CD14-positive monocyte (primary cell): ENCODE measurements at regions of chrX and their contacts with region 1.

Region 1: DNA sequence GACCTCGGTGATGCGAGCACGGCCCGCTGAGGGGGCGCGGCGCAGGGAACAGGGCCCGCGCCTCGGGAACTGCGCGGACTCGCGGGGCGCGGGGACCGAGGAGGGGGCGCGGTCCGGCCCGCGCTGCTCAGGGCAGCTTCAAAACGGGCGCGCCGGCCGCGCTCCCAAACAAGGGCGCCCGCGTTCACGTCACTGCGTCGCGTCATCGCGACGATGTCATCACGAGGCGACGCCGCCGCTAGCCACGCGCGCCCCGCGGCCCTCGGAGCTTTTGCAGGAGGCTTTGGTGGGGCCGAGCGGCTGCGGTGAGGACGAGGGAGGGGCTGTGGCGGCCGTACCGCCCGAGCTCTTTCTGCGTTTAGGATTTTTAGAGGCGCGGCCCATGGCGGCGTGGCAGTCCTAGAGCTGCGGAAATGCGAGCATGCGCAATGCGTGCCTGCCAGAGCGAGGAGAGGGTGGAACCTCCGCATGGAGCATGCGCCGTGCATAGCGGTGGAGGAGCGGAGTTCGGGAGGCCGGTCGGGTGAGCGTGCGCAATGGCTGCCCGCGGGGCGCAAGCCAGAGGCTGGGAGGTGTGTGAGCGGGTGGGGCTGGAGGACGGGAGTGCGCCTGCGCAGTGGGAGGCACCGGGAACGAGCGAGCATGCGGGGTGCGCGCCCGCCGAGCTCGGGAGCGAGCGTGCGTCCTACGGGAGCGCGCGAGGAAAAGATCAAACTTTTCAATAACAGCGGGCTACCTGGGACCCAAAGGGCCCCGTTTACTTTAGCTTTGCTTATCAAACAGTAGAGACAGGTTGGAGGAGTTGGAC is at the start of gene PPP2R3B:
- DNase-seq: peak; percentile 97 to 99 (median 99)
- H3K4me3 ChIP-seq: peak within 1 kb of the TSS; percentile 75 to 89 (median 84)
- H3K4me3 Mint-ChIP-seq: peak within 1 kb of the TSS; percentile 82 to 94
- H3K27ac ChIP-seq: peak within 1 kb of the TSS; percentile 87 to 99
- H3K27ac Mint-ChIP-seq: peak within 1 kb of the TSS; percentile 93 to 98 (median 95)
- H3K4me1 ChIP-seq: peaks cover 10 to 11% of the 10 kb centered on the region in 2 donors
- H3K4me1 Mint-ChIP-seq: peaks cover 4% of the 10 kb centered on the region
- H3K27me3 ChIP-seq: no peaks in the 10 kb centered on the region
- H3K27me3 Mint-ChIP-seq: peaks cover 0 to 2% (median 0%) of the 10 kb centered on the region in 3 donors
- CTCF ChIP-seq: no peak
- polyA plus RNA-seq, gene PPP2R3B: 2.1 to 9.0 (median 2.3) TPM

Region 2: DNA sequence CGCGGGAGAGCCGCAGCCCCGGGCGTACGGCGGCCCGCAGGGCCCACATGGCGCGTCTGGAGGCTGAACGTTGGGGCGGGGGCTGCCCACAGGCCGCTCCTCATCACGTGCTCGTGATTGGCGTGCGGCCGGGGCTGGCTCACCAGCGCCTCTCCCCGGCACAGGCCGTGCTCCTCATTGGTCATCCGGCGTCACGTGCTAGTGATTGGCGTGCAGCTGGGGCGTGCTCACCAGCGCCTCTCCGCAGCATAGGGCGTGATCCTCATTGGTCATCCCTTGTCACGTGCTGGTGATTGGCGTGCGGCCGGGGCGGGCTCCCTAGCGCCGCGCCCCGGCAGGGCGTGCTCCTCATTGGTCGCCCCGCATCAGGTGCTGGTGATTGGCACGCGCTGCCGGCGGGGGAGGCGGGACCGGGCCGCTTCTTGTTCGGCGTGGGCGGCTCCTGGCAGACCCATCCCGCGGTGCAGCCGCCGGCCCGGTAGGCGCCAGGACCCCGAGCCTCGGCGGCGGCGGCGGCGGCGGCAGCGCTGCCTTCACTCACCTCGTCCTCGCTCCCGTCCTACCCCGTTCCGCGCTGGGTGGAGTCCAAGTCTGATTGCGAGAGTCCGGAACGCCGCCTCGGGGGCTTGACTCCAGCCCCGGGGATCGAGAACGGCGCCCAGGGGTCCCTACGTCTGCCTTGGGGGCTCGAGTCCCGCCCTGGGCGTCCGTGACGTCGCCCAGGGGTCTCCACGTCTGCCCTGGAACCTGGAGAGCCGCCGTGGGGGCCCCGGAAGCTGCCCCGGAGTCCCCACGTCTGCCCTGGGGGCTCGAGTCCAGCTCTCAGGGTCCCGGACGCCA is 68.0 kb before region 1 on chrX and contains the start of gene GTPBP6:
- intact Hi-C with region 1: loop called (anchors 2 to 5 kb)
- DNase-seq: peak; percentile 99 to 100 (median 100)
- H3K4me3 ChIP-seq: peak within 1 kb of the TSS; percentile 81 to 98 (median 85)
- H3K4me3 Mint-ChIP-seq: peak within 1 kb of the TSS; percentile 85 to 93
- H3K27ac ChIP-seq: peak within 1 kb of the TSS; percentile 92 to 93
- H3K27ac Mint-ChIP-seq: peak within 1 kb of the TSS; percentile 96 to 100 (median 98)
- H3K4me1 ChIP-seq: peaks cover 19 to 23% of the 10 kb centered on the region in 2 donors
- H3K4me1 Mint-ChIP-seq: peaks cover 28% of the 10 kb centered on the region
- H3K27me3 ChIP-seq: peaks cover 0 to 24% of the 10 kb centered on the region in 2 donors
- H3K27me3 Mint-ChIP-seq: peaks cover 10 to 30% (median 29%) of the 10 kb centered on the region in 3 donors
- CTCF ChIP-seq: no peak
- polyA plus RNA-seq, gene GTPBP6: 17.2 to 39.3 (median 27.0) TPM

Region 3: DNA sequence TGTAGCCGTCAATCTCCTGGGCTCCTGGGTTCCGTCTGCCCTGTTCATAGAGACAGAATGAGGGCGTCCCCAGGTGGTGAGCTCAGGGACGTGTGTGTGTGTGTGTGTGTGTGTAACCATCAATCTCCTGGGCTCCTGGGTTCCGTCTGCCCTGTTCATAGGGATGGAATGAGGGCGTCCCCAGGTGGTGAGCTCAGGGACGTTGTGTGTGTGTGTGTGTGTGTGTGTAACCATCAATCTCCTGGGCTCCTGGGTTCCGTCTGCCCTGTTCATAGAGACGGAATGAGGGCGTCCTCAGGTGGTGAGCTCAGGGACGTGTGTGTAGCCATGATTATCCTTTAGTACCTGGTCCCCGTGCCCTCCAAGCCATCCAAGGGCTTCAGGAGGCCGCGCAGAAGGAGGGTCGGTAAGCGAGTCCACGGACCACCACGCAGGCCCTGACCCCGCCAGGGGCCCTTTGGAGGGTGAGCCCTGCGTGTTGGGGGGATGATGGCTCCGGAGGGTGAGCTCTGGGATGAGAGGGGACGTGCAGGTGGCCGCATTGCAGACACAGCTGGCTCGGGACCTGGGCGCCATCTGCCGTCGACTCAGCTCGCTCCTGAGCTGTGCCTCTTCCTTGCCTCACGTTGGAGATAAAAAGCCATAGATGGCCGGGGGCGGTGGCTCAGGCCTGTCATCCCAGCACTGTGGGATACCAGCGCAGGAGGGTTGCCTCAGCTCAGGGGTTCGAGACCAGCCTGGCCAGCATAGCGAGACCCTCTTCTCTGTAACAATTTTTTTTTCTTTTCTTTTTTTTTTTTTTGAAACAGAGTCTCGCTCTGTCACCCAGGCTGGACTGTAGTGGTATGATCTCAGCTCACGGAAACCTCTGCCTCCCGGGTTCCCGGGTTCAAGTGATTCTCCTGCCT is 63.0 kb before region 1 on chrX:
- intact Hi-C with region 1: loop called (anchors 2 to 5 kb)
- DNase-seq: peak in 1 of 3 donors; percentile 21
- H3K4me3 ChIP-seq: no peak overlapping the region
- H3K4me3 Mint-ChIP-seq: no peak overlapping the region
- H3K27ac ChIP-seq: no peak overlapping the region
- H3K27ac Mint-ChIP-seq: no peak overlapping the region
- H3K4me1 ChIP-seq: peaks cover 19 to 24% of the 10 kb centered on the region in 2 donors
- H3K4me1 Mint-ChIP-seq: peaks cover 33% of the 10 kb centered on the region
- H3K27me3 ChIP-seq: peaks cover 0 to 27% of the 10 kb centered on the region in 2 donors
- H3K27me3 Mint-ChIP-seq: peaks cover 12 to 53% (median 40%) of the 10 kb centered on the region in 3 donors
- CTCF ChIP-seq: peak; percentile 31